ENCODE measurements at regions of chr1 and their contacts with region 1.

Region 1: GRCh38 chr1:147504801-147505311 is 36.4 kb upstream of the BCL9 start:
- DNase-seq: no peak
- CTCF ChIP-seq: no peak

Region 2: GRCh38 chr1:147635342-147635741 is 130.5 kb after region 1 on chr1:
- in situ Hi-C with region 1: loop called (anchors 5 kb)
- DNase-seq: no peak
- CTCF ChIP-seq: no peak

Region 3: DNA sequence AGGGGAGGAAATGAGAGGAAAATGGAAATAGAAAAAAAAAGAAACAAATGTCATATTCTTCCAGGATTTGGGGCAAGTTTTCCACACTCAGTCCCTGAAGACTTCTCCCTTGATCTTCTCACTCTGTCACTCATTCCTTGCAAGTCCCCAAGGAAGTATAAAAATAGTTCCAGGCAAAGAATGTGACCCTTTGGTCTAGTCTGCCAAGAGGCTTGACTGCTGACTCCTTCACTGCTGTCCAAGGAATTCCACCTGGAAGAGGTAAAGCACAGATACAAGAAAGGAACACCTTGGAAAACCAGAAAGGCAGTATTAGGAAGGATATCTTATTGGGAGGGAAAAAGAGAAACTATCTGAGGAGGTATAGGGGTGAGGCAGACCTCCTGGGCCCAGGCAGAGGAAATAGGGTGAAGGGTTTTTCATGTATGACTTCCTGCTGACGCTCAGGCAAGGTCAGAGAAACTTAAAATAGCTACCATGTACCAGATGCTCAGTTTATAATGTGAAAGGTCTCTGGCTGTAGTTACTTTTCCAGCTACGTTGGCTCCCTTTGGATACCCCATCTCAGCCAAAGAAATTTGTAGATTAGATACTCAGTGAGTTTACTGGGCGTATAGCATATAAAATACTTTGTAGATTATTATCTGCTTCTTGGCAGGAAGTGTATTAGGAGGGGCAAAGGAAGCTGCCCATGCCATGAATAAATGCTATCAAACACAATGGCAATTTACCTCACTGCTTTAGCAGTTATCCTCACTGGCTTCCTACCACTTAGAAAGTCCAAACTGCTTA is 257.6 kb after region 1 on chr1:
- in situ Hi-C with region 1: no loop called
- DNase-seq: no peak
- CTCF ChIP-seq: no peak

Measured in GM13976 (cell line).